ENCODE measurements at regions of chr1 and their contacts with region 1.

Region 1: DNA sequence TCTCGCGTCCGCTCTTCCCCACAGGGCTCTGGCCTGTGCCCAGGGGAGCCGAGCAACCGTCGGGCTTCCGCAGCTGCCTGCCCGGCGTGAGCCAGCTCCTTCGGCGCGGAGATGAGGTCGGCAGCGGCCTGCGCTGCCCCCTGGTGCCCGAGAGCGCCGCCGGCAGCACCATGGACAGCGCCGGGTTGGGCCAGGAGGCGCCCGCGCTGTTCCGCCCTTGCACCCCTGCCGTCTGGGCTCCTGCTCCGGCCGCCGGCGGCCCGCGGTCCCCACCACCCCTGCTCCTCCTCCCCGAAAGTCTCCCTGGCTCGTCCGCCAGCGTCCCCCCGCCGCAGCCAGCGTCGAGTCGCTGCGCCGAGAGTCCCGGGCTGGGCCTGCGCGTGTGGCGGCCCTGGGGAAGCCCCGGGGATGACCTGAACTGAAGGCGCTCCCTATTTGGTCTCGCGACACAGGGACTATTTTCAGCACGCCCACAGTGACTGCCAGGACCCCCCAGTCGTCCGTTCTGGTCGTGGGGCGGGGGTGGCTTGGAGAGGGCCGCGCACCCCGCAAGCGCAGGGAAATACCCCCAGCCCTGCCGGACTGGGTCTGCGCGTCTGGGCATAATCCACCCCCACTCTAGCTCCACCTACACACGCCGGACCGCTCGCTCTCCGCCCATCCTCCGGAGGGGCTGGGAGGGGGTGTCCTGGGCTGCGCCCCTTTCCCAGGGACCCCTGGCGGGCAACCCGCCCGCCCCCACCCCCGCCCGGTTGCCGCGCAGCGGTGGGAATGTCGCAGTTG is 1.3 kb downstream of the HES3 start:
- DNase-seq: peak; percentile 66
- H3K4me3 ChIP-seq: peak overlapping the region; percentile 5 to 28 (median 15)
- H3K27ac ChIP-seq: no peak overlapping the region
- H3K4me1 ChIP-seq: peaks cover 5% of the 10 kb centered on the region
- H3K27me3 ChIP-seq: peaks cover 33 to 50% of the 10 kb centered on the region in 2 experiments
- CTCF ChIP-seq: peak; percentile 85 to 95
- POLR2A ChIP-seq: no peak

Region 2: GRCh38 chr1:5161372-5161771 is 1083.9 kb before region 1 on chr1:
- CTCF ChIA-PET with region 1: no interaction called
- POLR2A ChIA-PET with region 1: no interaction called
- dilution Hi-C with region 1: no loop called
- intact Hi-C with region 1: no loop called
- DNase-seq: no peak
- H3K4me3 ChIP-seq: no peak overlapping the region
- H3K27ac ChIP-seq: no peak overlapping the region
- H3K4me1 ChIP-seq: no peaks in the 10 kb centered on the region
- H3K27me3 ChIP-seq: no peaks in the 10 kb centered on the region
- CTCF ChIP-seq: no peak
- POLR2A ChIP-seq: no peak

Region 3: DNA sequence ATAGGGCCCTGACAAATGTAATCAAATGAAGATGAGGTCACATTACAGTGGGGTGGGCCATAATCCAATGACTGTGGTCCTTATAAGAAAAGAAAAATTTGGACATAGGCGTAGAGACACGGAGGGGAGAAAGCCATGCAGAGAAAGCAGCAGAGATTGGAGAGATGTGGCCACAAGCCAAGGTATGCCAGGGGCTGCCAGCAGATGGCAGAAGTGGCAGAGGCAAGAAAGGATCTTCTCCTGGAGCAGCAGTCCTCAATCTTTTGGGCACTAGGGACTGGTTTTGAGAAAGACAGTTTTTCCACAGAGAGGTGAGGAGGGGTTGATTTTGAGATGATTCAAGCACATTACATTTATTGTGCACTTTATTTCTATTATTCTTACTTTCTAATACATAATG is 608.1 kb before region 1 on chr1:
- CTCF ChIA-PET with region 1: no interaction called
- POLR2A ChIA-PET with region 1: no interaction called
- dilution Hi-C with region 1: no loop called
- intact Hi-C with region 1: no loop called
- DNase-seq: no peak
- H3K4me3 ChIP-seq: no peak overlapping the region
- H3K27ac ChIP-seq: no peak overlapping the region
- H3K4me1 ChIP-seq: no peaks in the 10 kb centered on the region
- H3K27me3 ChIP-seq: no peaks in the 10 kb centered on the region
- CTCF ChIP-seq: no peak
- POLR2A ChIP-seq: no peak

Region 4: GRCh38 chr1:6082430-6082971 is 162.8 kb before region 1 on chr1:
- CTCF ChIA-PET with region 1: interaction called, 13 read pairs
- POLR2A ChIA-PET with region 1: no interaction called
- dilution Hi-C with region 1: no loop called
- intact Hi-C with region 1: loop called (anchors 1 kb)
- DNase-seq: no peak
- H3K4me3 ChIP-seq: no peak overlapping the region
- H3K27ac ChIP-seq: no peak overlapping the region
- H3K4me1 ChIP-seq: no peaks in the 10 kb centered on the region
- H3K27me3 ChIP-seq: no peaks in the 10 kb centered on the region
- CTCF ChIP-seq: peak in 1 of 2 donors; percentile 57
- POLR2A ChIP-seq: no peak

Region 5: DNA sequence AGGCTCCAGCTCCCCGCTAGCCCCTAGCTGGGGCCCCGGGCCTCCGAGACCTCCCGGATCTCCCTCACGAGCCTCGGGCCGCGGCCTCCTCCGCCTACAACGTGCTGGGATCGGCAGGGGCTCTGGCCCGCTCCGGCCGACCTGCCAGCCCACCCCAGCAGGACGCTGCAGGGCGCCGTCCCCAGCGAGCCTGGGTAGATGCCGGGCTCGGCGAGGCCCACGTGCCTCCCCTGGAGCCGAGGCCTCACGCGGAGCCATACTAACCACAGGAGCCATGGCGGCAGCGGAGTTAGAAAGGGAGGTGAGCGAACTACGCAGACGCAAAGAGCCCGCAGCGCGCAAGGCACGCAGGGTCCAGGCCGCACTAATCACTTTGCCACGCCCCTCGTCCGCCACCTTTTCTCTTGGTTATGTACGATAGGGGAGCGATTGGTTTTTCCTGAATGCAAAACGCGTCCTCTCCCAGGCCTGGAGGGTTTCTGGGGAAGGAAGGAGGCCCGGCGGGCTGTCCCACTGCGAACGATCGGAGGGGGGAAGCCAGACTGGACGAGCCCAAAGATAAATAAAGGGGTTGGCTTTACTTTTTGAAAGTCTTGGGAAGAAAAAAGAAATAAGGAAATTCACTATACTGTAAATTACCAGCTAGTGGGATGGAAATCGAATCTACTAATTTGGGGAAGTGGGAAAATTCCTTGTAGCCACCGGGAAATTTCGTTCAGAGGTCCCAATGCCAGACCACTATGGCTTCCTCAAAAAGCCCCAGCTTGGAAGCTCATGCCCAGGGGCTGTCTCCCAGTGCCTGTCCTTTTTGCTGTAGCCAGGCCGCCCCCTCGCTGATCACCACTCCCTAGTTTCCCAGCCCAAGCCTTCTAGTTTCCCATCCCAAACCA is 45.7 kb before region 1 on chr1 and contains the start of gene RPL22:
- CTCF ChIA-PET with region 1: interaction called, 32 read pairs
- POLR2A ChIA-PET with region 1: no interaction called
- dilution Hi-C with region 1: no loop called
- intact Hi-C with region 1: no loop called
- DNase-seq: peak; percentile 98
- H3K4me3 ChIP-seq: peak within 1 kb of the TSS; percentile 78 to 90 (median 82)
- H3K27ac ChIP-seq: peak within 1 kb of the TSS; percentile 66
- H3K4me1 ChIP-seq: peaks cover 17% of the 10 kb centered on the region
- H3K27me3 ChIP-seq: no peaks in the 10 kb centered on the region
- CTCF ChIP-seq: no peak
- POLR2A ChIP-seq: peak; percentile 85
- total RNA-seq, gene RPL22: 343 and 372 TPM in 2 replicates

Region 6: GRCh38 chr1:6280761-6281451 is 35.6 kb after region 1 on chr1:
- CTCF ChIA-PET with region 1: interaction called, 7 read pairs
- POLR2A ChIA-PET with region 1: no interaction called
- dilution Hi-C with region 1: no loop called
- intact Hi-C with region 1: loop called (anchors 1 kb)
- DNase-seq: no peak
- H3K4me3 ChIP-seq: no peak overlapping the region
- H3K27ac ChIP-seq: no peak overlapping the region
- H3K4me1 ChIP-seq: no peaks in the 10 kb centered on the region
- H3K27me3 ChIP-seq: no peaks in the 10 kb centered on the region
- CTCF ChIP-seq: peak; percentile 8 to 32
- POLR2A ChIP-seq: no peak

Region 7: GRCh38 chr1:6359216-6360116 is 114.2 kb after region 1 on chr1:
- CTCF ChIA-PET with region 1: interaction called, 17 read pairs
- POLR2A ChIA-PET with region 1: no interaction called
- dilution Hi-C with region 1: no loop called
- intact Hi-C with region 1: no loop called
- DNase-seq: peak; percentile 88
- H3K4me3 ChIP-seq: no peak overlapping the region
- H3K27ac ChIP-seq: peak overlapping the region; percentile 60
- H3K4me1 ChIP-seq: peaks cover 20% of the 10 kb centered on the region
- H3K27me3 ChIP-seq: no peaks in the 10 kb centered on the region
- CTCF ChIP-seq: peak in 1 of 2 donors; percentile 21
- POLR2A ChIP-seq: no peak

Region 8: DNA sequence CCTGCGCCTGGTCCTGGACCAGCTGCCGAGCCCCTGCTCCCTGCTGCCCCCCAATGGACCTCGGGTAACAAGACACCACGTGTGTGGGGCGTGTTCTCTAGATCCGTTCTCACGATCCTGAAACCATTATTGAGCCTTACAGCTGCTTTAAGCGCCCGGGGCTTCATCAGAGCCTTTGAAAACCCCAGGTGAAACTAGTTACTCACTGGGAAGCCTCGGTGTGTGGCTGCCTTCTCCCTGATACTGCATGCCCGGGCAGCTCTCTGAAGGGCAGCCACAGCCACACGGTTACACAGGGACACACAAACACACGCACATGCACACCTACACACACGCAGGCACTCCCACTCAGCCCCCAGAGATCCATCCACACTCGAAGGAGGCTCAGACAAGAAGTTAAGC is 169.2 kb after region 1 on chr1:
- CTCF ChIA-PET with region 1: interaction called, 14 read pairs
- POLR2A ChIA-PET with region 1: no interaction called
- dilution Hi-C with region 1: no loop called
- intact Hi-C with region 1: no loop called
- DNase-seq: peak; percentile 52
- H3K4me3 ChIP-seq: no peak overlapping the region
- H3K27ac ChIP-seq: no peak overlapping the region
- H3K4me1 ChIP-seq: peaks cover 8% of the 10 kb centered on the region
- H3K27me3 ChIP-seq: peaks cover 4 to 8% of the 10 kb centered on the region in 2 experiments
- CTCF ChIP-seq: peak; percentile 53 to 77
- POLR2A ChIP-seq: no peak

Measured in endothelial cell of umbilical vein (primary cell).